ENCODE measurements at regions of chr9 and their contacts with region 1.

Region 1: DNA sequence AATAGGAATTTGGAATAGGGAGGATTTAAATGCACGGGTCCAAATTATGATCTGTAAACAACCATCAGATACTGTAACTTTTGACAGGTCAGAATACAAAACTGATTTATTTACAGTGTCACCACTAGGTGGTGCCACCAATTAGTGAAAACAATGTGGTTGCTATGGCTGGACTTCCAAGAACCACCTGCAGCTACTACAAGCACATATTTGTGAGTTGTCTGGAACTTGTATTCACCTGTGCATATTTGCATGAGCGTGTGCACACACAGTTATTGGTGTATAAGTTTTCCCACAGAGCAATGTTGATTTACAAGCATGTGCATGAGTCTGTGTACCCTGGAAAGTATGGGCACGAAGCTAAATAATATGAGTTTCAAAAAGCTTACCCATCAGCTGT is 3.0 kb upstream of the HRCT1 start:
- DNase-seq: peak in 1 of 3 donors; percentile 70
- ATAC-seq: peak; percentile 23
- H3K4me3 ChIP-seq: no peak overlapping the region
- H3K4me1 ChIP-seq: peaks cover 39% of the 10 kb centered on the region
- CTCF ChIP-seq: peak; percentile 47

Region 2: DNA sequence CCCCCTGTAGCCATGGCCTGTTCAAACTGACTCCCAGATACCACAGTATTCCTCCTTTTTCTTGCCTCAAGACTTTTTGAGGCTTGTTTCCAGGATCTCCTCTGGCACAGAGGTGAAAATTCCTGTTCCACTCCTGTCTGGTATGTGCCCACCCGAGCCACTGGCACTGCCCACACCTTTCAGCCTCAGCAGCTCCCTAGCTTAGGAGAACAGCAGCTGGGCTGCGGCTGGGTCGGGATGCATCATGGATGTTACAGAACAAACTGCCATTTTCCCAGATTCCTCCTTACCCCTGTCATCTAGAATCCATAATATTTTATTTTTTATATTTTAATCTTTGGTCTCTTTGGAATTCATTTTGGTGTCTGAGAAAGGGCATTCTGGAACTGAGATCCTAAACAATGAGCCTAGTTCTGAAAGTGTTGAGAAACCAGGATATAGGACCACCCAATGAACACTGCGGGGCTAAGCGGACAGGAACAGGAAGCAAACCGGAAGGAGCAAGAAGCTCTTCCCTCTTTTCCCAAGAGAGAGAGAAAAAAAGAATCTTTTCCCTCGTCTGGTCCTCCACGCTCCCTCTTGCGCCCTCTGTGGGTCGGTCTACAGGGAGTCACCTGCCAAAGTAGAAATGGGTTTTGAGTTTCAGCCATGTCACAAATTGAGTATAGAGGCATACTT is 42.4 kb after region 1 on chr9:
- intact Hi-C with region 1: loop called (anchors 5 kb)
- DNase-seq: peak; percentile 83 to 88 (median 87)
- ATAC-seq: peak; percentile 62
- H3K4me3 ChIP-seq: no peak overlapping the region
- H3K4me1 ChIP-seq: peaks cover 32% of the 10 kb centered on the region
- CTCF ChIP-seq: peak; percentile 61